ENCODE measurements at regions of chr2 and their contacts with region 1.

Region 1: GRCh38 chr2:157194097-157194688 is 63.3 kb upstream of the GALNT5 start:
- DNase-seq: peak; percentile 46
- ATAC-seq: peak; percentile 70
- H3K4me3 ChIP-seq: no peak overlapping the region
- H3K27ac ChIP-seq: no peak overlapping the region
- H3K4me1 ChIP-seq: no peaks in the 10 kb centered on the region
- H3K27me3 ChIP-seq: no peaks in the 10 kb centered on the region; a peak in 1 of 5 replicates
- CTCF ChIP-seq: peak; percentile 71
- EP300 ChIP-seq: no peak
- POLR2A ChIP-seq: no peak
- RAD21 ChIP-seq: 0 out of 2 replicates have a peak, but pooled peaks have one; percentile 34

Region 2: DNA sequence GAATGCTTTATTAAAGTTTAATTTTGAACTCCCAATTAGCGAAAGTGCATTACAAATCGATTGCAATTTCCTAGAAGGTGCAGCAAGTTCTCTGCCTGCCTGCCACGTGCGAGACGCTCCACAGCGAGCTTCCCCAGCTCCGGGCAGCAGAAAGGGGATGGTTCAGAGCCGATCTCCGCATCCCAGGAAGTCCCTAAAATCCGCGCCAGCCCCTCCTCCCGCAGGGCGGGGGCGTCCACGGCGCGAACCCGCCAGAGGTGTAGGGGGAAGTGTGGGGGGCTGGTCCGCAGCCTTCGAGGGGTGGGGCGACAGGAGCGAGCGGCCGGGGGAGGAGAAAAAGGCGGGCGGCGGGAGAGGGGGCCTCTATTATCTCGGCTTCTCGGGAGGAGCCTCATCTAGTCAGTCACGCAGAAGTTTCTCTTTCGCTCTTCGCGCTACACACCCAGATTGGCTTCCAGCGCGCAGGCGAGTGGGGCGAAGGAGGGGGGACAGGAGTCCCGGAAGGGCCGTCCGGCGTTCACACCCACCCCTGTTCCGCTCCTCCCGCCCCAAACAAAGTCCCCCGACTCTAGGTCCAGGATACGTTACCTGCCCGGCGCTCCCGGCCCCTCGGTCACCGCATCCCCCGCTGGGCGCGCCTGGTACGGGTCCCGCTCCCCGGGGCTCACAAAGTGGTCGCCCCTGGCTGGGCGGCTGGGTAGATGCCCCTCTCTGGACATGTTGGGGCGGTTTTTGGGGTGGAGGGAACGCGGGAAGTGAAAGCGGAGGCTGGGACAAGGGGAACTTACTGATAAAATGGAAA is 852.5 kb before region 1 on chr2:
- CTCF ChIA-PET with region 1: no interaction called
- POLR2A ChIA-PET with region 1: no interaction called
- in situ Hi-C with region 1: loop called (anchors 25 kb)
- intact Hi-C with region 1: loop called (anchors 2 kb)
- DNase-seq: peak; percentile 52
- ATAC-seq: peak; percentile 82
- H3K4me3 ChIP-seq: peak overlapping the region; percentile 72 to 78 (median 77)
- H3K27ac ChIP-seq: no peak overlapping the region
- H3K4me1 ChIP-seq: peaks cover 14% of the 10 kb centered on the region
- H3K27me3 ChIP-seq: peaks cover 3 to 37% of the 10 kb centered on the region in 2 experiments; a peak in 3 of 5 replicates
- CTCF ChIP-seq: no peak
- EP300 ChIP-seq: no peak
- POLR2A ChIP-seq: no peak
- RAD21 ChIP-seq: no peak